ENCODE measurements at regions of chr13 and their contacts with region 1.

Region 1: GRCh38 chr13:24217601-24218281 is 57.2 kb downstream of the SPATA13 start:
- DNase-seq: peak; percentile 38
- ATAC-seq: peak; percentile 13

Region 2: GRCh38 chr13:24053519-24054251 is 164.1 kb before region 1 on chr13:
- intact Hi-C with region 1: loop called (anchors 10 kb)
- DNase-seq: no peak
- ATAC-seq: peak; percentile 75

Region 3: GRCh38 chr13:24512197-24512907 is 294.6 kb after region 1 on chr13 and contains the start of gene PARP4:
- intact Hi-C with region 1: no loop called
- DNase-seq: peak; percentile 87
- ATAC-seq: peak; percentile 99
- total RNA-seq, gene PARP4: 25.6 TPM

Measured in left ventricle myocardium superior (tissue), 1 donor.